Endothelial cell of umbilical vein (primary cell): ENCODE measurements at regions of chr12 and their contacts with region 1.

Region 1: GRCh38 chr12:121060149-121061001 is 21.3 kb upstream of the OASL start:
- DNase-seq: peak; percentile 78
- H3K4me3 ChIP-seq: peak overlapping the region in 2 of 3 experiments; percentile 6 to 19
- H3K27ac ChIP-seq: peak overlapping the region; percentile 35
- H3K4me1 ChIP-seq: peaks cover 4% of the 10 kb centered on the region
- H3K27me3 ChIP-seq: peaks cover 0 to 2% of the 10 kb centered on the region in 2 experiments
- CTCF ChIP-seq: peak; percentile 32 to 47
- POLR2A ChIP-seq: no peak

Region 2: DNA sequence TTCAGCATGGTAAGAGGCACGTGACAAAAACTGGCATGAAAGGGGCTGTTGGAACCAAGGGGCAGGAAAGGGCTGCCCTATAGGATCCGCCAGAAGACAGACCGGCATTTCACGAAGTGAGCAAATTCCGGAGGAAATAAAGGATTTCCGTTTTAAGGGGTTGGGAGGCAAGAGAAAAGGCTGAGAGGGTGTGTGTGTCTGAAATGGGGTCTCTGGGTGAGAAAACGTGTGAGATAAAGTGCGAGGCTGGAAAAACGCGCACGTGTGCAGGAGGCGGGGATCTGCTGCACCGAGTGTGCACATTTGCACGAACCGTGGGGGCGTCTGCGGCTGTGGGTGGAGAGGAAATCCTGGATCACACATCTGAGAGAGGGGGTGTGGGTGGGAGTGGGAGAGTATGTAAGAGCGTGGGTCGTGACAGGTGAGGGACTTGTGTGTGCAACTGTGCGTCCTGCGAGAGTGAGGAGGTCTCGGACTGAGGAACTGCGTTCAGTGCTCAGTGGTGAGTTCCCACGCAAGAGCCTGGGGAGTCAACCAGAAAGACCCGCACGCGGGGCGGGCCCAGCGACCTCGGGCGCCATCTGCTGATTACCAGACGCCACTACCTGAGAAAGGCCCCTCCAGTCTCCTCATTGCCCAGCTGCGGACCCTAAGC is 35.3 kb after region 1 on chr12:
- CTCF ChIA-PET with region 1: interaction called, 48 read pairs
- POLR2A ChIA-PET with region 1: no interaction called
- dilution Hi-C with region 1: no loop called
- intact Hi-C with region 1: loop called (anchors 1 kb)
- DNase-seq: peak; percentile 83
- H3K4me3 ChIP-seq: peak overlapping the region in 2 of 3 experiments; percentile 6 to 11
- H3K27ac ChIP-seq: peak overlapping the region; percentile 82
- H3K4me1 ChIP-seq: peaks cover 13% of the 10 kb centered on the region
- H3K27me3 ChIP-seq: no peaks in the 10 kb centered on the region
- CTCF ChIP-seq: peak; percentile 76 to 97
- POLR2A ChIP-seq: no peak

Region 3: GRCh38 chr12:121209624-121210572 is 149.5 kb after region 1 on chr12 and contains the start of gene P2RX4:
- CTCF ChIA-PET with region 1: interaction called, 4 read pairs
- POLR2A ChIA-PET with region 1: no interaction called
- dilution Hi-C with region 1: no loop called
- intact Hi-C with region 1: loop called (anchors 5 kb)
- DNase-seq: peak; percentile 76
- H3K4me3 ChIP-seq: peak within 1 kb of the TSS; percentile 35 to 75 (median 52)
- H3K27ac ChIP-seq: peak within 1 kb of the TSS; percentile 59
- H3K4me1 ChIP-seq: peaks cover 23% of the 10 kb centered on the region
- H3K27me3 ChIP-seq: no peaks in the 10 kb centered on the region
- CTCF ChIP-seq: peak; percentile 16 to 23
- POLR2A ChIP-seq: peak; percentile 78
- total RNA-seq, gene P2RX4: 72.8 and 116 TPM in 2 replicates

Region 4: GRCh38 chr12:121230538-121230907 is 170.1 kb after region 1 on chr12:
- CTCF ChIA-PET with region 1: interaction called, 8 read pairs
- POLR2A ChIA-PET with region 1: interaction called, 3 read pairs
- dilution Hi-C with region 1: no loop called
- intact Hi-C with region 1: loop called (anchors 1 kb)
- DNase-seq: no peak
- H3K4me3 ChIP-seq: no peak overlapping the region
- H3K27ac ChIP-seq: no peak overlapping the region
- H3K4me1 ChIP-seq: no peaks in the 10 kb centered on the region
- H3K27me3 ChIP-seq: no peaks in the 10 kb centered on the region
- CTCF ChIP-seq: no peak
- POLR2A ChIP-seq: no peak